CD4-positive, alpha-beta memory T cell (primary cell): ENCODE measurements at regions of chrX and their contacts with region 1.

Region 1: GRCh38 chrX:50579955-50580354 is 109.3 kb upstream of the DGKK start:
- DNase-seq: peak in 4 of 5 donors; percentile 20 to 40 (median 33)
- H3K4me3 ChIP-seq: no peak overlapping the region
- H3K4me3 Mint-ChIP-seq: no peak overlapping the region
- H3K27ac ChIP-seq: no peak overlapping the region
- H3K27ac Mint-ChIP-seq: no peak overlapping the region
- H3K4me1 ChIP-seq: no peaks in the 10 kb centered on the region
- H3K4me1 Mint-ChIP-seq: peaks cover 0 to 1% (median 0%) of the 10 kb centered on the region in 4 donors
- H3K27me3 ChIP-seq: no peaks in the 10 kb centered on the region
- H3K27me3 Mint-ChIP-seq: peaks cover 3% of the 10 kb centered on the region in 2 donors

Region 2: DNA sequence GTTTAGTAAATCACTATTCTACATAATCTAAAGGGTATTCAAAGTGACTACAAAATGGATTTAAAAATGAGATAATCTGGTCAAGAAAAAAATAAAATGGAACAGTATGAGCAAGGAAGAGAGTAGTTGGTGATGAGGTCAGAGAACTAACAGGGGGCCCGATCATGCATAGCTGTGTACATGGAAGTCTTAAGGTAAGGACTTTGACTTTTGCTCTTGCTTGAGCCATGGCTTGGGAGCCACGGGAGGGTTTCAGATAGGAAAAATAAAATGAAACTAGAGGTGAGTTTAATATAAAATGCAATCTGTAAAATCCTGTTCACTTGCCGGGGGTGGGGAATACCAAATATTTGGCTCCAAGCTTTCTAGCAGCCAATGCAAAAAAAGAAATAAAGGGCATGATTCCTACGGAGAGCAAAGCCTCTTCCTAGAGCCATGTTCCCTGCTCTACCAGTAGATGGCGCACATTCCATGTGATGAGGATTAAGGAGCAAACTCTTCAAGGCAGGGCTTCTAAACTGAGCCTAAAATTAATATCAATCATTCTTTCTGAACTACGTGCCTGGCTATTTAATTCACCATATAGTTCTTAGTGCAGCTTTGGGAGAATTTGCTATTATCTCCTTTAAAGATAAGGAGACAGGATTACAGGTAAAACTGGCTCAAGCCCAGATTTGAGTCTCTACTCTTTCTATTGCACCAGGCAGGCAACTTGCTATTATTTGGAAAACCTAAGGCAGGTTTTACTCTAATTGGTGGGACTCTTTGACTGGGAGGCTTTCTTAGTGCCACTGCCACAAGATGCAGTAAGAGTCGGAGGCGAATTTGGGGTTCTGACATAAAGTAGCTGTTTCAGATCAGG is 664.4 kb before region 1 on chrX:
- CTCF ChIA-PET with region 1: interaction called, 6 read pairs
- POLR2A ChIA-PET with region 1: no interaction called
- intact Hi-C with region 1: loop called (anchors 1 kb)
- DNase-seq: peak; percentile 52 to 58 (median 53)
- H3K4me3 ChIP-seq: no peak overlapping the region
- H3K4me3 Mint-ChIP-seq: no peak overlapping the region
- H3K27ac ChIP-seq: no peak overlapping the region
- H3K27ac Mint-ChIP-seq: no peak overlapping the region
- H3K4me1 ChIP-seq: no peaks in the 10 kb centered on the region
- H3K4me1 Mint-ChIP-seq: peaks cover 0 to 2% (median under 1%) of the 10 kb centered on the region in 4 donors
- H3K27me3 ChIP-seq: no peaks in the 10 kb centered on the region
- H3K27me3 Mint-ChIP-seq: no peaks in the 10 kb centered on the region

Region 3: GRCh38 chrX:50100188-50100587 is 479.8 kb before region 1 on chrX:
- CTCF ChIA-PET with region 1: interaction called, 4 read pairs
- POLR2A ChIA-PET with region 1: no interaction called
- intact Hi-C with region 1: loop called (anchors 10 kb)
- DNase-seq: no peak
- H3K4me3 ChIP-seq: no peak overlapping the region
- H3K4me3 Mint-ChIP-seq: no peak overlapping the region
- H3K27ac ChIP-seq: no peak overlapping the region
- H3K27ac Mint-ChIP-seq: no peak overlapping the region
- H3K4me1 ChIP-seq: no peaks in the 10 kb centered on the region
- H3K4me1 Mint-ChIP-seq: no peaks in the 10 kb centered on the region
- H3K27me3 ChIP-seq: no peaks in the 10 kb centered on the region
- H3K27me3 Mint-ChIP-seq: peaks cover 0 to 2% of the 10 kb centered on the region in 2 donors

Region 4: GRCh38 chrX:50629786-50630185 is 49.8 kb after region 1 on chrX:
- CTCF ChIA-PET with region 1: no interaction called
- POLR2A ChIA-PET with region 1: no interaction called
- intact Hi-C with region 1: no loop called
- DNase-seq: no peak
- H3K4me3 ChIP-seq: no peak overlapping the region
- H3K4me3 Mint-ChIP-seq: no peak overlapping the region
- H3K27ac ChIP-seq: no peak overlapping the region
- H3K27ac Mint-ChIP-seq: no peak overlapping the region
- H3K4me1 ChIP-seq: no peaks in the 10 kb centered on the region
- H3K4me1 Mint-ChIP-seq: no peaks in the 10 kb centered on the region
- H3K27me3 ChIP-seq: no peaks in the 10 kb centered on the region
- H3K27me3 Mint-ChIP-seq: peaks cover 0 to 3% of the 10 kb centered on the region in 2 donors